HepG2 (cell line): ENCODE measurements at regions of chr6 and their contacts with region 1.

Region 1: GRCh38 chr6:75791881-75792280 is 42.8 kb downstream of the MYO6 start:
- DNase-seq: no peak
- ATAC-seq: no peak
- H3K4me3 ChIP-seq: no peak overlapping the region
- H3K27ac ChIP-seq: no peak overlapping the region
- H3K4me1 ChIP-seq: no peaks in the 10 kb centered on the region
- H3K27me3 ChIP-seq: no peaks in the 10 kb centered on the region
- CTCF ChIP-seq: no peak
- EP300 ChIP-seq: no peak
- POLR2A ChIP-seq: no peak
- RAD21 ChIP-seq: no peak

Region 2: DNA sequence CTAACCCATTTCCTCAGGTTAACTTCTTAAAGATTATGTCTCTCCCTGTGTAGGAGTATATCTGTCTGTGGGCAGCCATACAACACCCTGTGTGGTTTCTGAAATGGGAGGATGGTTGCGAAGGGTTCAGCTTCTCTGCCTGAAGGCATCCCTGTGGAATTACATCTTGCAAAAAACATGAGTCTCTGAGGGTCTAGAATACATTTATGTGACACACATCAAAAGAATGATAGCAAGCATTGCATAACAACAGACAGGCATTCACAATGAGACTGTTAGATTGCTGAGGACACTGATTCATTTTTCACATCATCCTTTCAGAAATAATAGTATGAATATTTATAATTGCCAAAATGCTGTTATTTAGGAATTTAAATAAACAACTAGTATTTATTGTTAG is 1000.5 kb after region 1 on chr6:
- CTCF ChIA-PET with region 1: no interaction called
- POLR2A ChIA-PET with region 1: no interaction called
- in situ Hi-C with region 1: no loop called
- intact Hi-C with region 1: loop called (anchors 5 kb)
- DNase-seq: no peak
- ATAC-seq: no peak
- H3K4me3 ChIP-seq: no peak overlapping the region
- H3K27ac ChIP-seq: no peak overlapping the region
- H3K4me1 ChIP-seq: peaks cover 21% of the 10 kb centered on the region
- H3K27me3 ChIP-seq: no peaks in the 10 kb centered on the region
- CTCF ChIP-seq: no peak
- EP300 ChIP-seq: no peak
- POLR2A ChIP-seq: no peak
- RAD21 ChIP-seq: no peak